Endothelial cell of umbilical vein (primary cell): ENCODE measurements at regions of chr16 and their contacts with region 1.

Region 1: DNA sequence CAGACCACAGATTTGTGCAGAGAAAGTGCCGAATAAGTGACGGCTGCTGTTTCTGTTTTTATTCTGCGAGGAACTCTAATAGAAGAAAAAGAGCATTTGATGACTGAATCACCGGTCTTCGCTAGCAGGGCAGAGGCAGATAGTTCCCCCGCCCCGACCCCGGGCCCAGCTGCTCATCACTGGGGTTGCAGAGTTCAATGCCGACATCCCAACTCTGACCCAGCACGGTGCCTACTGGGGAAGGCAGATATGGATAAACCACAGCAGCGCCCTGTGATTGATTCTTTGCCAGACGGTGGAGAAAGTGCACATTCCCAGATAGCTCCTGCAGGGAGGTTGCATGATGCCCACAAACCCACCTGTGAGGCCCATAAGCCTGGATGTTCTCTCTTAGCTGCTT is 357.9 kb upstream of the HSBP1 start:
- DNase-seq: no peak
- H3K4me3 ChIP-seq: no peak overlapping the region
- H3K27ac ChIP-seq: no peak overlapping the region
- H3K4me1 ChIP-seq: no peaks in the 10 kb centered on the region
- H3K27me3 ChIP-seq: no peaks in the 10 kb centered on the region
- CTCF ChIP-seq: no peak
- POLR2A ChIP-seq: no peak

Region 2: DNA sequence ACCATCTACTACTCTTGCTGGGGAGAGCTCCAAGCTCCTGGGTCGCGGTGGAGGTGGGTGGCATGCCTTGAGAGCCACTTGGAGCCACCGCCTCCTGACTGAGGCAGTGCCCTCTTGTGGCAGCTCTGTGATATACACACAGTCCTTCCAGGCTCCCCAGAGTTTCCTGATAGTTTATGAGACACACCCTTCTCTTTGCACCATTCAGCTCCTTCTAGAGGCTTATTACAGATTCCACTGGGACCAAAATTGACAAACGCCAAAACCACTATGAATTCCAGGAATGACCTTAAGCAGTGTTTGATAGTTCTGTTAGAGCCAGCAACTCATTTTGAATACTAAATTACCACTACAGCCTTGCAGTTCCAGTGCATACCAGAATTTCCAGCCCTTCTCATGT is 993.2 kb before region 1 on chr16:
- CTCF ChIA-PET with region 1: interaction called, 8 read pairs
- POLR2A ChIA-PET with region 1: no interaction called
- dilution Hi-C with region 1: no loop called
- intact Hi-C with region 1: loop called (anchors 5 kb)
- DNase-seq: peak; percentile 62
- H3K4me3 ChIP-seq: no peak overlapping the region
- H3K27ac ChIP-seq: no peak overlapping the region
- H3K4me1 ChIP-seq: no peaks in the 10 kb centered on the region
- H3K27me3 ChIP-seq: peaks cover 0 to 8% of the 10 kb centered on the region in 2 experiments
- CTCF ChIP-seq: peak; percentile 80 to 89
- POLR2A ChIP-seq: no peak

Region 3: GRCh38 chr16:82603784-82604411 is 846.0 kb before region 1 on chr16:
- CTCF ChIA-PET with region 1: interaction called, 6 read pairs
- POLR2A ChIA-PET with region 1: no interaction called
- dilution Hi-C with region 1: no loop called
- intact Hi-C with region 1: loop called (anchors 5 kb)
- DNase-seq: peak; percentile 68
- H3K4me3 ChIP-seq: no peak overlapping the region
- H3K27ac ChIP-seq: no peak overlapping the region
- H3K4me1 ChIP-seq: no peaks in the 10 kb centered on the region
- H3K27me3 ChIP-seq: peaks cover 2 to 4% of the 10 kb centered on the region in 2 experiments
- CTCF ChIP-seq: peak; percentile 61 to 80
- POLR2A ChIP-seq: no peak

Region 4: GRCh38 chr16:82626791-82627261 is 823.0 kb before region 1 on chr16 and contains the start of gene CDH13:
- CTCF ChIA-PET with region 1: interaction called, 8 read pairs
- POLR2A ChIA-PET with region 1: no interaction called
- dilution Hi-C with region 1: no loop called
- intact Hi-C with region 1: loop called (anchors 5 kb)
- DNase-seq: peak; percentile 62
- H3K4me3 ChIP-seq: peak within 1 kb of the TSS; percentile 52 to 82 (median 66)
- H3K27ac ChIP-seq: peak within 1 kb of the TSS; percentile 96
- H3K4me1 ChIP-seq: peaks cover 46% of the 10 kb centered on the region
- H3K27me3 ChIP-seq: peaks cover 0 to 2% of the 10 kb centered on the region in 2 experiments
- CTCF ChIP-seq: no peak
- POLR2A ChIP-seq: no peak
- total RNA-seq, gene CDH13: 98.5 and 124 TPM in 2 replicates

Region 5: DNA sequence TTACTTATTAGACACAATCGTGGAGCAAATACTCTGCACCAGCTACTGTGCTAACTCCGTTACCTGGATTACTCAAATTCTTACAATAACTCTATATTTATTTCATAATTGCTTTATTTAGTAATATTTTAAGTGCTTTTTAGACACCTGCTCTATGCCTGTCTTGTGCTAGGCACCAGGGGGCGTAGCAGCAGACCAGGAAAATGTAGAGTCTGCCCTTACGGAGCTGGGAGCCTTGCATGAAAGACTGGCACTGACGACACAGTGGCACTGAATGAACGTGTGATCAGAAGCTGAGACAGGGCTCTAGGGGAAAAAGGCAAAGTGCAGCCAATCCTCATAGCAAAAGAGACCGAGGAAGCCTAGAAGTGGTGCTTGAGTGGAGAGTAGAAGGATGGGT is 336.5 kb before region 1 on chr16:
- CTCF ChIA-PET with region 1: interaction called, 57 read pairs
- POLR2A ChIA-PET with region 1: no interaction called
- dilution Hi-C with region 1: no loop called
- intact Hi-C with region 1: loop called (anchors 1 kb)
- DNase-seq: peak; percentile 39
- H3K4me3 ChIP-seq: no peak overlapping the region
- H3K27ac ChIP-seq: no peak overlapping the region
- H3K4me1 ChIP-seq: no peaks in the 10 kb centered on the region
- H3K27me3 ChIP-seq: no peaks in the 10 kb centered on the region
- CTCF ChIP-seq: peak; percentile 52 to 58
- POLR2A ChIP-seq: no peak

Region 6: GRCh38 chr16:83878838-83879237 is 429.0 kb after region 1 on chr16:
- CTCF ChIA-PET with region 1: no interaction called
- POLR2A ChIA-PET with region 1: no interaction called
- dilution Hi-C with region 1: no loop called
- intact Hi-C with region 1: loop called (anchors 5 kb)
- DNase-seq: peak; percentile 70
- H3K4me3 ChIP-seq: no peak overlapping the region
- H3K27ac ChIP-seq: no peak overlapping the region
- H3K4me1 ChIP-seq: no peaks in the 10 kb centered on the region
- H3K27me3 ChIP-seq: peaks cover 13 to 20% of the 10 kb centered on the region in 2 experiments
- CTCF ChIP-seq: peak; percentile 22 to 38
- POLR2A ChIP-seq: no peak